ENCODE measurements at regions of chr19 and their contacts with region 1.

Region 1: GRCh38 chr19:32570081-32570785 is 10.8 kb upstream of the PDCD5 start:
- DNase-seq: peak; percentile 56 to 61
- H3K4me3 ChIP-seq: no peak overlapping the region
- H3K27ac ChIP-seq: no peak overlapping the region
- H3K4me1 ChIP-seq: no peaks in the 10 kb centered on the region
- H3K27me3 ChIP-seq: peaks cover 46% of the 10 kb centered on the region
- CTCF ChIP-seq: peak; percentile 85

Region 2: GRCh38 chr19:30682999-30683536 is 1887.2 kb before region 1 on chr19:
- CTCF ChIA-PET with region 1: no interaction called
- POLR2A ChIA-PET with region 1: no interaction called
- intact Hi-C with region 1: loop called (anchors 5 kb)
- DNase-seq: peak; percentile 49 to 54
- H3K4me3 ChIP-seq: no peak overlapping the region
- H3K27ac ChIP-seq: no peak overlapping the region
- H3K4me1 ChIP-seq: no peaks in the 10 kb centered on the region
- H3K27me3 ChIP-seq: peaks cover 70% of the 10 kb centered on the region
- CTCF ChIP-seq: peak; percentile 91

Region 3: DNA sequence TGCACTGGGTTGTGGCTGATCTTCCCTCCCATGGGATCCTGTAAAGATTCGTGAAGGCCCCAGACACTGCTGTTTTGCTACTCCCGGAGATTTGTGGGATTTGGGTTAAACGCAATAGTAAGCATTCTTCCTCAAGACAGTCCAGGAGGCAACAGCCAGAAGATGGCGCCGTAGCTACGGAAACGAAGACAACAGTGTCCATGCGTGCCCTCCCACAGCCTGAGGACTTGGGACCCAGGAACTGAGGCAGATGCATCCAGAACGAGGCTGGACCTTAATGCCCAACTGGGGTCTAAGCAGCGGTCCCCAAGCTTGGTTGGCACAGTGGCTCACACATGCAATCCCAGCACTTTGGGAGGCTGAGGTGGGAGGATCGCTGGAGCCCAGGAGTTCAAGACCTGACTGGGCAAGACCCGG is 282.4 kb before region 1 on chr19:
- CTCF ChIA-PET with region 1: no interaction called
- POLR2A ChIA-PET with region 1: no interaction called
- intact Hi-C with region 1: loop called (anchors 2 kb)
- DNase-seq: peak in 1 of 2 experiments; percentile 35
- H3K4me3 ChIP-seq: no peak overlapping the region
- H3K27ac ChIP-seq: no peak overlapping the region
- H3K4me1 ChIP-seq: no peaks in the 10 kb centered on the region
- H3K27me3 ChIP-seq: peaks cover 72% of the 10 kb centered on the region
- CTCF ChIP-seq: peak; percentile 54; the same call in 1 of the 2 replicates

Region 4: DNA sequence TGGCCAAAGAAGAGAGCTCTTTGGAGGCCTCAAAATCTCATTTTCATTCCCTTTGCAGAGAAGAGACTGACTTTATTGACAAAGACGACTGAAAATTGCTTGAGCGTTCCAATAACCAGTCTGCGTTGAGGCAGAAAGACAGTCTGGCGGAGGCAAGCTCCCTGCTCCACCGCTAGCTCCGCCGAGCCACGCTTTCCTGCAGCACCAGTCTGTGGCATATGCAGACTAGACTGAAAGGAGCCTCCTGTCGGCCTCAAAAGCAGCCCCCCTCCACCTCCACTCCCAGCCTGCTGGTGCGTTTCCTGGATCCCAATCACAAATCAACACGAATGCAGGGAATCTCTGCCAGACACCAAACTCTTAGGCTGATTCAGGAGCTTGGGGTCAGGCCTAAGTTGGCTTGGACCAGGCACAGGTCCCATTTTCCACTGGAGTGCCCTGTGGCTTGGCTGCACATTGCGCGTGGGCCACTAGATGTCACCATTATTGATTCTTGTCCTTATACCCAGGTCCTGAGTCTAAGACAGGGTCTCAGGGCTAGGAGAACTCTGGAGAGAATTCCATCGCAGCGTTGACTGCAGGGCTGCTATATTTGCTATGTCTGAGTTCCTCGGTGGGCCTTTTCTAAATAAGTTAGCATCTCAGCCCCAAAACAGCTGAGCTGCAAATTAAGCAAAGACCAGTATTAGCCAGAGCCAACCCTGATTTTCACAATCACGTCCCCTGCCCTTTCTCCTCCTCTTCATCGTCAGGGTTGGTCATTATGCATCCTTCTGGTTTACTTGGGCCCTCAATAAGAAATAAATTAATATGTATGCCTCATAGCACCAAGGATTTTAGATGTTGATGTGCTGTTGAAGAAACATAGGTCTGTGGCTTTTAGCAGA is 230.0 kb before region 1 on chr19:
- CTCF ChIA-PET with region 1: no interaction called
- POLR2A ChIA-PET with region 1: no interaction called
- intact Hi-C with region 1: loop called (anchors 1 kb)
- DNase-seq: peak in 1 of 2 experiments; percentile 47
- H3K4me3 ChIP-seq: no peak overlapping the region
- H3K27ac ChIP-seq: no peak overlapping the region
- H3K4me1 ChIP-seq: peaks cover 18% of the 10 kb centered on the region
- H3K27me3 ChIP-seq: no peaks in the 10 kb centered on the region
- CTCF ChIP-seq: peak; percentile 73

Region 5: DNA sequence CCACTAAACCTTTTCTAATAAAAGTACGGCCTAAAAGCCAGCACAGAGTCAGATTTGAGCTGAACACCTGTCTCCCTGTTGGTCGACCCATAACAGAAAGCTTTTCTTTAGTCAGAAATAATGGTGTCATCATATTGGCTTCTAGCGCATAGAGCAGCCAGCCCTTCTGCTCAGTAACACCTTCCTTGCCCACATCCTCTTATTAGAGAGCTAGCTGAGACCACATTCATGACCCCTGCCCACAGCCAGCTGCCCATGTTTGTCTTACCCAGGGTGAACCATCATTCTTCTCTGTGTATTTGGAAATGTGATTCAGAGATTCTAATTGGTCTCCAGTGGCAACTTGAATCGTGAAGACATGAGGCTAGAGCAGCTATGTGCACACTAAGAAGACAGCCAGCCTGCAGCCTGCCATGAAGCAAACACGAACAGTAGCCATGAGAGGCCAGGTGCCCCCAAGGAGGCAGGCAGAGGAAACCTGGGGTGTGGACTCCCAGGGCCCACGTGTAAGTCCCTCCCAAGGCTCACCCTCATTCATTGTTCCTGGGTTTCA is 71.5 kb before region 1 on chr19:
- CTCF ChIA-PET with region 1: interaction called, 11 read pairs
- POLR2A ChIA-PET with region 1: no interaction called
- intact Hi-C with region 1: no loop called
- DNase-seq: peak in 1 of 2 experiments; percentile 23
- H3K4me3 ChIP-seq: no peak overlapping the region
- H3K27ac ChIP-seq: no peak overlapping the region
- H3K4me1 ChIP-seq: no peaks in the 10 kb centered on the region
- H3K27me3 ChIP-seq: peaks cover 67% of the 10 kb centered on the region
- CTCF ChIP-seq: no peak

Region 6: GRCh38 chr19:32642771-32643170 is 72.5 kb after region 1 on chr19:
- CTCF ChIA-PET with region 1: no interaction called
- POLR2A ChIA-PET with region 1: no interaction called
- intact Hi-C with region 1: no loop called
- DNase-seq: no peak
- H3K4me3 ChIP-seq: no peak overlapping the region
- H3K27ac ChIP-seq: no peak overlapping the region
- H3K4me1 ChIP-seq: no peaks in the 10 kb centered on the region
- H3K27me3 ChIP-seq: no peaks in the 10 kb centered on the region
- CTCF ChIP-seq: no peak